ENCODE measurements at regions of chr9 and their contacts with region 1.

Region 1: DNA sequence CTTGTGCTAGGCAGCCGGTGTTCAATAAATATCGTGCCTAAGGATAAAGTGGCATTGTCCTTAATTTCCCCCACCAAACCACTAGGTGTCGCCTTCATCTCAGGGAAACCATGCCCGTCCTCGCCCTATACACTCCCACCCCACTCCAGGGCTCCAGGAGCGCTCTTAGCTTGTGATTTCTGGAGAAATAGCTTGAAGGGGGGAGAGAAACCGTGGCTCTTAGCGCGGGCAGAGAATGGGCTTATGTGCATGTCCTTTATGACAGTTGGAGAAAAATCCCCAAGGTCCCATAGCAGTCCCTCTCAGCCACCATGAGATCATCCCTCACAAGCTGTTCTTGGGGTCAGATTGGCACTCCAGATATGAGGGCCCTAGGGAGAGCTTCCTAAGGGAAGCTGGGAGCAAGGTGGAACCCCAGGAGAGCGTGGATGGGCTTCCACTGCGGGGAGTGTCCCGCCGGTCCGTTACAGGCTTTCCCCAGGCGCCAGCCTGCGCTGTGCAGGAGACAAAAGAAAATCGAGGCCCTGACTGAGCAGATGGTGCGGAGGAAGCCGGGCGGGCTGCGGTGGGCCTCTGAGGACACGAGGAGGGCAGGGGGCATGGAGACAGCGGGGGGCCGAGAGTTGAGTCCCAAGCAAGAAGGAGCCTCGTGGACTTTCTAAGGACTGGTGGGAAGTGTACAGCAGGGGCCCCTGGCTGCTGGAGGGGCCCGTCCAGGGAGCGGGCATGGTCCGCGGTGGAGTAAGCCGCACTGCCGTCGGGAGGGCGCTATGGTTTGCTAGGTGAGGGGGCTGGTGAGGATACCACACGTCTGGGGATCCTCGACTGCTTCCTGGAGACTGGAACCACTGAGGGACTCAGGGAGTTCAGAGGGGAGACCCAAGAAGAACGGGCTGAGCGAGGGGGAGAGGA is 750 bp upstream of the NPR2 start:
- DNase-seq: peak in 3 of 4 donors; percentile 64 to 89 (median 81)
- ATAC-seq: peak; percentile 96
- H3K4me3 ChIP-seq: peak overlapping the region in 1 of 2 donors; percentile 5
- H3K27ac ChIP-seq: peak overlapping the region; percentile 44 to 50
- H3K4me1 ChIP-seq: peaks cover 9 to 22% of the 10 kb centered on the region in 2 donors
- H3K27me3 ChIP-seq: peaks cover 0 to 14% of the 10 kb centered on the region in 2 donors
- CTCF ChIP-seq: peak; percentile 74 to 76

Region 2: GRCh38 chr9:35820076-35820475 is 29.4 kb after region 1 on chr9:
- intact Hi-C with region 1: loop called in 1 of 2 experiments (anchors 5 kb)
- DNase-seq: no peak
- ATAC-seq: no peak
- H3K4me3 ChIP-seq: no peak overlapping the region
- H3K27ac ChIP-seq: no peak overlapping the region
- H3K4me1 ChIP-seq: no peaks in the 10 kb centered on the region
- H3K27me3 ChIP-seq: no peaks in the 10 kb centered on the region
- CTCF ChIP-seq: no peak

Region 3: DNA sequence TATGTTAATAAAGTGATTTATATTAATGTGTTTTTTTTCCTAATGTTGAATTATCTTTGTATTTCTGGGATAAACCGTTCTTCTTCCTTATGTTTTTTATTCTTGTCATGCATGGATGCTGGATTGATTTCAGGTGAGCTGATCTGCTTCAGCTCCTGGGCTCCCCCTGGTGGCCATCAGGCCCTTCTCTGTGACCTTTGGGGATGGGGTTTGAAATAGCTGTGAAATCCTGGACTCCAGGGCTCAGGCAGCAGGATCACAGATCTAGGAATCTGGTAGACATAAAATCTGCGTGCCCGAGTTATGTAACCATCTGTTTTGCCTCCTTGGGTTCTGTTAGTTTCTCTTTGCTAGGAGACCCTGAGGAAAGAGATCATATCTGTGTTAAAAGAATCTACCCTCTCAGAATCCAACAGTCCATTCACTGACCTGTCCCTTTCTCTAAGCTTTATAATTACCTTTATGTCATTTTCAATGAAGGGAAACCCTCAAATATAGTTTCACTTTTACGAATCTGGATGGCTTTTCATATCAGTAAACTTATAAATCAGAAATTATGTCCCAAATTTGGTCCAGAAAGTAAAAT is 91.7 kb after region 1 on chr9:
- intact Hi-C with region 1: loop called in 1 of 2 experiments (anchors 2 kb)
- DNase-seq: peak; percentile 73 to 93 (median 83)
- ATAC-seq: peak; percentile 95
- H3K4me3 ChIP-seq: no peak overlapping the region
- H3K27ac ChIP-seq: no peak overlapping the region
- H3K4me1 ChIP-seq: no peaks in the 10 kb centered on the region
- H3K27me3 ChIP-seq: peaks cover 0 to 5% of the 10 kb centered on the region in 2 donors
- CTCF ChIP-seq: peak; percentile 94 to 95

Measured in left lung (tissue), 14 donors.